CD14-positive monocyte (primary cell): ENCODE measurements at regions of chr2 and their contacts with region 1.

Region 1: DNA sequence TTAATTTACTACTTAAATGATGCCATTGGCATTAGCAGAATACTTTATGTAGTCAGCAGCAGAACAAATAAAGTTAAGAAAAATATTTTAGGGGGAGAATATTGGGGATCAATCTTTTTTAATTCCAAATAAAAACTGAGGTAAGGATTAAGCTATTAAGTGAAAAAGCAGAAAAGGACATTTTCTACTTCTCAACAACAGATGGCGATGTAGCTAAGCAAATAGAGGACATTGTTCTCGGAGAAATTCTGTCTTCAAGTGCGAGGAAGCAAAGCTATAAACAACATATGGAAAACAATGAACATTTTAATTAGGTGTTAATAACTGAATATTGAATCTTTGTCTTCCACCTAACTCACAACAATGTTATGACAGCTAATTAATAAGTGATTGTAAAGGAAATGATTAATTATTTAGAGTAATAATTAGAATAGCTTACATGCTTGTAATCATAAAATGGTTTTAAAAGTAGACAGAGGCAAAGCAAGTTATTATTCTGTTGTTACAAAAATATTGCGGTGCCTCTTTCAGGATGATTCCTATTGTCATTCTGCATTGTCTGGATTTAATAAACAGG is 32.9 kb upstream of the CCDC93 start:
- DNase-seq: peak; percentile 33 to 66 (median 42)
- H3K4me3 ChIP-seq: no peak overlapping the region
- H3K4me3 Mint-ChIP-seq: no peak overlapping the region
- H3K27ac ChIP-seq: no peak overlapping the region
- H3K27ac Mint-ChIP-seq: no peak overlapping the region
- H3K4me1 ChIP-seq: peaks cover 15 to 25% of the 10 kb centered on the region in 2 donors
- H3K4me1 Mint-ChIP-seq: peaks cover 24% of the 10 kb centered on the region
- H3K27me3 ChIP-seq: no peaks in the 10 kb centered on the region
- H3K27me3 Mint-ChIP-seq: peaks cover 13 to 18% (median 16%) of the 10 kb centered on the region in 3 donors
- CTCF ChIP-seq: peak; percentile 80

Region 2: DNA sequence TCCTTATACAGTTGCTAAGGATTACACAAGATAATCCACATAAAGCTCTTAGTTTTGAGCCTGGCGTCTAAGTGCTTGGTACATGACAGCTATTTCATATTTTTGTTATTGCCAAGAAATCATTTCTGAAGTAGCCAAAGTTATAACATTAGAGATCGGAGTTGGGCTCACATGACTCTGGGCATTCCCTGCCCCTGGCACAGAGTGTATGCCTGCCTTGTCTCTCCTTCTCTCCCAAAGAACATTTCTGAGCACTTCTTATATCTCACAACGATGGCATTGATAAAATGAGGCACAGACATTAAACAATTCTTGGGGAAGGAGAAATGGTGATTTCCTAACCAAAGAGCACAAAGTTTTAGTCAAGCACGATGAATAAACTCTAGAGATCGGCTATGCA is 320.0 kb before region 1 on chr2:
- intact Hi-C with region 1: no loop called
- DNase-seq: no peak
- H3K4me3 ChIP-seq: no peak overlapping the region
- H3K4me3 Mint-ChIP-seq: no peak overlapping the region
- H3K27ac ChIP-seq: no peak overlapping the region
- H3K27ac Mint-ChIP-seq: no peak overlapping the region
- H3K4me1 ChIP-seq: no peaks in the 10 kb centered on the region
- H3K4me1 Mint-ChIP-seq: no peaks in the 10 kb centered on the region
- H3K27me3 ChIP-seq: no peaks in the 10 kb centered on the region
- H3K27me3 Mint-ChIP-seq: peaks cover 0 to 2% (median 0%) of the 10 kb centered on the region in 3 donors
- CTCF ChIP-seq: no peak

Region 3: GRCh38 chr2:118013724-118014491 is 32.8 kb before region 1 on chr2 and contains the start of gene CCDC93:
- intact Hi-C with region 1: loop called in 1 of 2 experiments (anchors 5 kb)
- DNase-seq: peak; percentile 78 to 91 (median 87)
- H3K4me3 ChIP-seq: peak within 1 kb of the TSS; percentile 74 to 91 (median 84)
- H3K4me3 Mint-ChIP-seq: peak within 1 kb of the TSS; percentile 97 to 99
- H3K27ac ChIP-seq: peak within 1 kb of the TSS; percentile 94 to 97
- H3K27ac Mint-ChIP-seq: peak within 1 kb of the TSS; percentile 92 to 97 (median 95)
- H3K4me1 ChIP-seq: peaks cover 58 to 71% of the 10 kb centered on the region in 2 donors
- H3K4me1 Mint-ChIP-seq: peaks cover 67% of the 10 kb centered on the region
- H3K27me3 ChIP-seq: no peaks in the 10 kb centered on the region
- H3K27me3 Mint-ChIP-seq: peaks cover 0 to 7% (median 2%) of the 10 kb centered on the region in 3 donors
- CTCF ChIP-seq: no peak
- polyA plus RNA-seq, gene CCDC93: 2.5 to 20.7 (median 5.8) TPM

Region 4: GRCh38 chr2:118061135-118061955 is 14.6 kb after region 1 on chr2:
- intact Hi-C with region 1: loop called in 1 of 2 experiments (anchors 2 kb)
- DNase-seq: peak; percentile 72 to 84 (median 76)
- H3K4me3 ChIP-seq: peak overlapping the region in 1 of 3 experiments; percentile 15
- H3K4me3 Mint-ChIP-seq: no peak overlapping the region
- H3K27ac ChIP-seq: peak overlapping the region; percentile 22 to 82
- H3K27ac Mint-ChIP-seq: peak overlapping the region; percentile 19 to 94 (median 80)
- H3K4me1 ChIP-seq: peaks cover 51 to 53% of the 10 kb centered on the region in 2 donors
- H3K4me1 Mint-ChIP-seq: peaks cover 52% of the 10 kb centered on the region
- H3K27me3 ChIP-seq: no peaks in the 10 kb centered on the region
- H3K27me3 Mint-ChIP-seq: peaks cover 0 to 7% (median 2%) of the 10 kb centered on the region in 3 donors
- CTCF ChIP-seq: peak; percentile 81

Region 5: DNA sequence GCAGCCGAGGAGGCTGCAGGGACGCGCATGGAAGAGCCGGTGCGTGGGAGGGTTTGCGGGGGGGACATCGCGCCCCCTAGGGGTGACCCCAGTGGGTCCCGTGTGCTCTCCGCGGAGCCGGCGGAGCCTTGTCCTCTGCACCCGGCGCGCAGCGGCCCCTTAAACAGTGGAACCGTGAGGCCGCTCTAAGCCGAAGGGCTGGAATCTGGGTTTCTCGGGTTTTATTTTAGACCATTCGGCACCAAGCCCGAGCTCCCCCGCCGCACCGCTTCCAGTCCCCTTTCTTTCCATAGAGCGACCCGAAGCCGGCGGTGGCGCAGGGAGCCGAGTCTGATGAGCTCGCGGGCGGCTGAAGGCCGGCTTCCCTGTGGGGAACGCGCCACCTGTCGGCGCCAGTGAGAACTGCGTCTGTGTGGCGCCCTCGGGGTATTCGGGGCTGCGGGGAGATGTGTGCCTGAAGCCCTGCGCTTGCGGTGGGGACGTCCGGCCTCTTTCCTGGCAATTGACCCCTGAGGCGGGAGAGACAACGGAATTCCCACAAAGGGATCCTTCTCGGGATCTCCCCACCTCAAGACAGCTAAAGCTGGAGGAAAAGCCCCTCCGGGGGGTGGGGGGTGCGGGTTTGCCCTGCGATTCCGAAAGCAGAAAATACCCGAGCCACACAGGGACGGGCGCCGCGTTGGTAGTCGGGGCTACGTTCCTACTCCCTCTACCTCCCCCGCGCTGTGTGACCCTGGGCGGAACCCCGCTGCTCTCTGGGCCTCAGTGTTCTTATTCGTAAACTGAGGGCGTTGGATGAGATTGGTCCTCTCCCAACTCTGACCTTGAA is 808.9 kb after region 1 on chr2:
- intact Hi-C with region 1: loop called in 1 of 2 experiments (anchors 10 kb)
- DNase-seq: peak; percentile 56 to 67 (median 58)
- H3K4me3 ChIP-seq: peak overlapping the region in 2 of 3 experiments; percentile 0 to 42
- H3K4me3 Mint-ChIP-seq: peak overlapping the region; percentile 71 to 89
- H3K27ac ChIP-seq: no peak overlapping the region
- H3K27ac Mint-ChIP-seq: no peak overlapping the region
- H3K4me1 ChIP-seq: peaks cover 11% of the 10 kb centered on the region in 2 donors
- H3K4me1 Mint-ChIP-seq: peaks cover 23% of the 10 kb centered on the region
- H3K27me3 ChIP-seq: peaks cover 86 to 100% of the 10 kb centered on the region in 2 donors
- H3K27me3 Mint-ChIP-seq: peaks cover 97 to 100% (median 100%) of the 10 kb centered on the region in 3 donors
- CTCF ChIP-seq: peak; percentile 97